ENCODE measurements at regions of chr15 and their contacts with region 1.

Region 1: DNA sequence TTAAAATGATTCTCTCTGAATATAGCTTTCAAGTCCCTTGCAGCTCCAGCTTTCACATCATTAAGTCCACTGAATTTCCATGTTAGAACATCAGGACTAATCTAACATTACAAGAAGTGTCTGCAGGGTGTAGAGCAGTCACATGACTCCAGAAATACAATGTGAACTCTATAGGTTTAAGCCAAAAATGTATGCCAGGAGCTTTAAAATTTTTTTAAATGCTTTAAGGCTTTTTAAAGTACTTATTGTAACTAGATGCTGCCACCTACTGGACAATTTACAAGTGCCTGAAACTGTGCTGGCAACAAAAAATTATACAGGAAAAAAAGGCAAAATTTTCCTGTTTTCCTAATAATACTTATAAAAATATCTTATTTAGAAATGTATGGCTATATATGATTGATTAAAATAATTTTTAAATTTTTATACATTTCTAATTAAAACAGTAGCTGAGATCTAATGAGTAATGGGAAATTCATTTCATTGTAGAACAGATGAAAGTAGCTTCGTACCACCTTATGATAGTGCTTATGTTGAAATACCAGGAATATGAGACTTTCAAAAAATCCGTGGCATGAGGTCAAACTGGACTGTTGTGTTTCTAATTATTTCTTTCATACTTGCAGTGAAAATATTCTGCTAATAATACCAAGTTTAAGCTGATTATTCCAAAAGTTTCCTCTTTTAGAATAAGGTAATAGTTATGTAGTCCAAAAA is 25.7 kb downstream of the FSIP1 start:
- DNase-seq: no peak
- ATAC-seq: peak; percentile 50; the same call in 1 of the 3 replicates
- H3K4me3 ChIP-seq: no peak overlapping the region
- H3K27ac ChIP-seq: no peak overlapping the region
- H3K4me1 ChIP-seq: no peaks in the 10 kb centered on the region
- H3K27me3 ChIP-seq: no peaks in the 10 kb centered on the region
- CTCF ChIP-seq: peak; percentile 51 to 67 (median 57)
- EP300 ChIP-seq: no peak
- POLR2A ChIP-seq: no peak
- RAD21 ChIP-seq: peak; percentile 76

Region 2: GRCh38 chr15:38707802-38708671 is 1048.9 kb before region 1 on chr15:
- CTCF ChIA-PET with region 1: interaction called, 16 read pairs
- POLR2A ChIA-PET with region 1: no interaction called
- RAD21 ChIA-PET with region 1: interaction called, 12 read pairs
- SMC1A ChIA-PET with region 1: interaction called, 13 read pairs
- in situ Hi-C with region 1: no loop called
- intact Hi-C with region 1: loop called (anchors 10 kb)
- DNase-seq: no peak
- ATAC-seq: peak; percentile 98
- H3K4me3 ChIP-seq: no peak overlapping the region
- H3K27ac ChIP-seq: no peak overlapping the region
- H3K4me1 ChIP-seq: no peaks in the 10 kb centered on the region
- H3K27me3 ChIP-seq: no peaks in the 10 kb centered on the region
- CTCF ChIP-seq: peak; percentile 75 to 82 (median 76)
- EP300 ChIP-seq: no peak
- POLR2A ChIP-seq: no peak
- RAD21 ChIP-seq: peak; percentile 91

Region 3: DNA sequence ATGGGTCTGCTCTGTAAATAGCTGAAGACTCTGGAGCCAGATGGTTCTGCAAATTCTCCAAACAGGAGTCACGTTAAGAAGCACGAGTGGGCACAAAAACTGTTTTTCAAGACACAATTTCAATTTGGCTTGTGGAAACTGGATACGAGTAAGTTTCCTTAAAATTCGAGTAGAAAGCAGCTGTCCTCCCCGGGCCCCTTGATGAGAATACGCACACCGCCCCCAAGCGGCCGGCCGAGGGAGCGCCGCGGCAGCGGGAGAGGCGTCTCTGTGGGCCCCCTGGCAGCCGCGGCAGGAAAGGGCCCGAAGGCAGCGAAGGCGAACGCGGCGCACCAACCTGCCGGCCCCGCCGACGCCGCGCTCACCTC is 176.9 kb before region 1 on chr15:
- CTCF ChIA-PET with region 1: interaction called, 68 read pairs
- POLR2A ChIA-PET with region 1: no interaction called
- RAD21 ChIA-PET with region 1: interaction called, 23 read pairs
- SMC1A ChIA-PET with region 1: interaction called, 34 read pairs
- in situ Hi-C with region 1: no loop called
- intact Hi-C with region 1: loop called (anchors 1 kb)
- DNase-seq: no peak
- ATAC-seq: peak; percentile 94
- H3K4me3 ChIP-seq: peak overlapping the region; percentile 58; the same call in 1 of the 2 replicates
- H3K27ac ChIP-seq: no peak overlapping the region
- H3K4me1 ChIP-seq: no peaks in the 10 kb centered on the region
- H3K27me3 ChIP-seq: peaks cover 4 to 5% of the 10 kb centered on the region in 2 experiments; a peak in 3 of 4 replicates
- CTCF ChIP-seq: peak; percentile 90 to 98 (median 91)
- EP300 ChIP-seq: no peak
- POLR2A ChIP-seq: no peak
- RAD21 ChIP-seq: peak; percentile 94

Region 4: GRCh38 chr15:39624806-39625205 is 132.2 kb before region 1 on chr15:
- CTCF ChIA-PET with region 1: interaction called, 10 read pairs
- POLR2A ChIA-PET with region 1: no interaction called
- RAD21 ChIA-PET with region 1: interaction called, 8 read pairs
- SMC1A ChIA-PET with region 1: interaction called, 44 read pairs
- in situ Hi-C with region 1: no loop called
- intact Hi-C with region 1: no loop called
- DNase-seq: peak; percentile 45
- ATAC-seq: peak; percentile 75
- H3K4me3 ChIP-seq: no peak overlapping the region
- H3K27ac ChIP-seq: 0 out of 2 replicates have a peak overlapping the region, but pooled peaks have one; percentile 24
- H3K4me1 ChIP-seq: peaks cover 30% of the 10 kb centered on the region
- H3K27me3 ChIP-seq: no peaks in the 10 kb centered on the region
- CTCF ChIP-seq: no peak
- EP300 ChIP-seq: peak; percentile 35 to 75; a peak in 2 of 4 replicates
- POLR2A ChIP-seq: no peak
- RAD21 ChIP-seq: no peak

Region 5: DNA sequence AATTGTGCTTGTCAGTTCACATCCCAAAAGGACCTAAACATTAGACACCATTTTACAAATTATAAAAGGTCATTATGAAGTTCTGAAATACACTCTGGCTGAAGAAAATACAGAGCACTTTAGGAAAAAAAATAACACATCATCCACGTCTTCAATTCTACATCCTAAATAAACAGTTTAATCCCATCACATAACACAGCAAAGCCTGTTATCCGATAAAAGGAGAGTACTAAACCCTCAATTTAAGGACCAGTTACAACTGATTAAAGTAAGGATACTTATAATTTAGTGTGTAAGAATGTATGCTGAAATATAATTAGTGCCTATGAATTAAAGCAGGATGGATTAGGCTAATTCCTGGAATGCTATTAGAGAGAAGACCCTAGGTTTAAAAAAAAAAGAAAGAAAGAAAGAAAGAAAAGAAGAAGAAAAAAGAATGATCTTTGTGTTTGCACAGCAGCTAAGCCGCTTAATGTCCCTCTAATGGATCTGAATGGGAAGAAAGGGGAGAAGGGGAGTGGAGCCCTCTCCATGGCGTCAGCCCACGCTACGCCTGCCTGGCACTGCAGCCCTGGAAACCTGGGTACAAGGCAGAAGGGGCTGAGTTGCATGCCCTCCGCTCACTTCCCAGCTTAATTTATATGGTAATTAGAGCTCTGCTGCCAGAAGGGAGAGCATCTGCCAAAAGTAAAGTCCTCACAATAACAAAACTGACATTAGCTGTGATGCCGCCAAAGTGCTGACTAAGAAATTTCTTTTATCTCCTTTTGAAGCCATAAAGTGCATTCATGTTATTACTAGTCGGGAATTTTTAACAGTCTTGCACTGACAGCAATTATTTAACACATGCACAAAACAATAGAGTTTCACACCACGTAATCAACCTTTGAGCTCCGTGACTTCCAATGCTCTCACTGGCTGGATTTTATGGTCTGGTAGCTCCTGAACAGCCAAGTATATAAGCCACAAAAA is 64.3 kb before region 1 on chr15:
- CTCF ChIA-PET with region 1: interaction called, 400 read pairs
- POLR2A ChIA-PET with region 1: interaction called, 4 read pairs
- RAD21 ChIA-PET with region 1: interaction called, 137 read pairs
- SMC1A ChIA-PET with region 1: interaction called, 220 read pairs
- in situ Hi-C with region 1: no loop called
- intact Hi-C with region 1: no loop called
- DNase-seq: no peak
- ATAC-seq: peak; percentile 82
- H3K4me3 ChIP-seq: no peak overlapping the region
- H3K27ac ChIP-seq: no peak overlapping the region
- H3K4me1 ChIP-seq: no peaks in the 10 kb centered on the region
- H3K27me3 ChIP-seq: peaks cover 0 to 2% of the 10 kb centered on the region in 2 experiments; a peak in 1 of 4 replicates
- CTCF ChIP-seq: no peak
- EP300 ChIP-seq: peak; percentile 68 to 71; a peak in 3 of 4 replicates
- POLR2A ChIP-seq: no peak
- RAD21 ChIP-seq: no peak

Region 6: GRCh38 chr15:39736412-39737197 is 20.4 kb before region 1 on chr15:
- CTCF ChIA-PET with region 1: interaction called, 34 read pairs
- POLR2A ChIA-PET with region 1: no interaction called
- RAD21 ChIA-PET with region 1: interaction called, 16 read pairs
- SMC1A ChIA-PET with region 1: interaction called, 30 read pairs
- in situ Hi-C with region 1: no loop called
- intact Hi-C with region 1: no loop called
- DNase-seq: no peak
- ATAC-seq: no peak
- H3K4me3 ChIP-seq: no peak overlapping the region
- H3K27ac ChIP-seq: no peak overlapping the region
- H3K4me1 ChIP-seq: no peaks in the 10 kb centered on the region
- H3K27me3 ChIP-seq: no peaks in the 10 kb centered on the region
- CTCF ChIP-seq: no peak
- EP300 ChIP-seq: no peak
- POLR2A ChIP-seq: no peak
- RAD21 ChIP-seq: no peak

Measured in GM12878 (cell line).